Naive thymus-derived CD4-positive, alpha-beta T cell (primary cell): ENCODE measurements at regions of chr1 and their contacts with region 1.

Region 1: DNA sequence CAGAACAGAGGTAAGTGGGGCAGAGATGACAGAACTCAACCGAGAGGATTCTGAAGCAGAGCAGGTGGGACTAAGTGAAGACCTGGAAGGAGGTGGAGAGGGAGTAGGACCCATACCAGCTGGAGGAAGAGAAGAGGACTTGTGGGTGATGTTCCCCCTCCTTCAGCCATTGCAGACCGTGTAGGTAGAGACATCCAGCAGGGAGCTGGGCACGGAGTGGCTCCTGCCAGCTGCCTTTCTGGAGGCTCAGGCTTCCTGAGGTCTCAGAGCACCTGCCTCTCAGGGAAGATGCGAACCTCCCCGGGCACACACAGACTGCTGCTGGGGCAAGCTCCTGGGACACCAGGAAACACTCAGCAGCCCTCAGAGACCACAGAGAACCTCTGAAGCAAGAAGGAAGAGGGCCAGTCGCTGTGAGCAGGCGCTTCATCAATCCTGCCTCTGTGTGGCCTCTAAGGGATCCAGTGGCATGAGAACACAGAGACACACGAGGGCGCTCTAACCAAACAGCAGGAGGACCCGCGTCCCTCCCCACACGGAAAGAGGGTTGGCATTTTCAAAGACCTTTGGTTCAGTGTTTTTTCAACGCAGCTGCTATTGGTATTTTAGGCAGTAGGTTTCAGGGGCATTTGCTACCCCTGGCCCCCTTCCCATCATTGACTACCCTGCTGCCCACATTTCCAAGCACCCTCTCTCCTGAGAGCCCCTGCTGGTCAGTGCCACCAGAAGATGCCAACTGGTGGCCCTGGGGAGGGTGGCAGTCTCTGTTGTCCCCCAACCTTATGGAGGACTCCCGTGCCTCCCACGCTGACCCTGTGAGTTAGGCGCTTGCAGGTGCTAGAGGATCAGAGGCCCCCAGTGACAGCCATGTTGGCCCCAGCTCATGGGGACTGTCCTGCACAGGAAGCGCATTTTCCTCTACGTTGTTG is 89.6 kb upstream of the EDN2 start:
- DNase-seq: peak; percentile 60 to 84 (median 76)
- ATAC-seq: peak; percentile 97
- H3K4me3 ChIP-seq: no peak overlapping the region
- H3K4me3 Mint-ChIP-seq: no peak overlapping the region
- H3K27ac ChIP-seq: no peak overlapping the region
- H3K27ac Mint-ChIP-seq: no peak overlapping the region
- H3K4me1 ChIP-seq: peaks cover 4 to 9% of the 10 kb centered on the region in 2 donors
- H3K4me1 Mint-ChIP-seq: peaks cover 0 to 32% (median 8%) of the 10 kb centered on the region in 7 donors
- H3K27me3 ChIP-seq: no peaks in the 10 kb centered on the region
- H3K27me3 Mint-ChIP-seq: no peaks in the 10 kb centered on the region

Region 2: DNA sequence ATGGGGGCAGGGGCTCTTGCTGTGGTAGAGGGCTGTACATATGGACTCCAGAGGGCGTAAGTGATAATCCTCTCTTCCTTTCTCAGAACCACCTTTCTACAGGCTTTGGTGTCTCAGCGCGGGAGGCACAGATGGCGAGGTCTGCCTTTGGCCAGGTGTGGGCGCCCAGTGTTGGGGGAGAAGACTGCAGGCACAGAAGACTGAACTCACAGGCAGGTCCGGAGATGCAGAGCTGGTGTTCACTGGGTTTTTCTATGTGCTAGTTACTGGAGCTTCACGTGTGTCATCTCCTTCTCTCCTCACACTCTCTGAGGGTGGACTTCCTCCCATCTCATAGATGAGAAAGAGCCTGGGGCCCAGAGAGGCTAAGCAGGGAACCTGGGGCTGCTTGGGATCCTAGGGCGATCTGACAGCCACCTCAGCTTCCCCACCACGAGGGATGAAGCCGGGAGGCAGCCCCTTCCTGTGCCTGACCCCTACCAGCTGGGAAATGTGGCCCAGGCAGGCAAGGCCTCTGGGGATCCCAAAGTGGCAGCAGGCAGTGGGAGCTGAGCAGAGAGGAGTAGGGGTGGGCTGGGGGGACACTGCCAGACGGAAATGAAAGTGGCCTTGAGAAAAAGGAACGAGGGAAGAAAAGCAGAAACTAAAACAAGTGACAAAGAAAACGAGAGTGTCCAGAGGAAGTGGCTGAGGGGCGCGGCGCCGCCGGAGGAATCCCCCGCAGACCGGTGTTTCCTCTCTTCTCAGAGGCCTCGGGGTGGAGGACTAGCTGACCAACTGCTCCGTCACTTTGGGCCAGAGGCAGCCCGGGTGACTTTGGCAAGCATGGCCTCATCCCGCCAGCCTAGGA is 153.1 kb after region 1 on chr1:
- CTCF ChIA-PET with region 1: no interaction called
- POLR2A ChIA-PET with region 1: no interaction called
- intact Hi-C with region 1: no loop called
- DNase-seq: peak in 1 of 9 donors; percentile 37
- ATAC-seq: peak; percentile 76
- H3K4me3 ChIP-seq: no peak overlapping the region
- H3K4me3 Mint-ChIP-seq: peak overlapping the region in 7 of 10 donors; percentile 8 to 74 (median 48)
- H3K27ac ChIP-seq: no peak overlapping the region
- H3K27ac Mint-ChIP-seq: peak overlapping the region in 2 of 9 donors; percentile 19 to 65
- H3K4me1 ChIP-seq: peaks cover 15 to 27% of the 10 kb centered on the region in 2 donors
- H3K4me1 Mint-ChIP-seq: peaks cover 14 to 51% (median 39%) of the 10 kb centered on the region in 7 donors
- H3K27me3 ChIP-seq: no peaks in the 10 kb centered on the region
- H3K27me3 Mint-ChIP-seq: no peaks in the 10 kb centered on the region

Region 3: DNA sequence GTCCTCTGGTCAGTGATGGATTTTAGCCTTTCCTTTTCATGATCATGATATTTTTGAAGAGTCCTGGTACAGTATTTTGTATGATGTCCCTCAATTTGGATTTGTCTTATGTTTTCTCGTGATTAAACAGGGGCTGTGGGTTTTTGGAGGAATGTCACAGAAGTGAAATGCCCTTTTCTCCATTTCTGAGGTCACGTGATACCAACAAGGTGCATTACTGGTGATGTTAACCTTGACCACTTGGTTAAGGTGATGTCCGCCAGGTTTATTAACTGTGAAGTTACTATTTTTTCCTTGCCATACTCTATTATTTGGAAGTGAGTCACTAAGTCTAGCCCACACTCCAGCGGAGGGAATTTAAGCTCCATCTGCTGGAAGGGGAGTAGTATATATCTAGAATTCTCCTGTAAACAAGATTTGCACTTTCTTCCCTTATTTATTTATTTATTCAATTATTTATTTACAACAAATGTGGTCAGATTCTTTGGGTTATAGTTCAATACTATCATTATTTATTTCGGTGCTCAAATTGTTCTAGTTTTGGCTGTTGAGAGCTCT is 221.2 kb after region 1 on chr1:
- CTCF ChIA-PET with region 1: interaction called, 3 read pairs
- POLR2A ChIA-PET with region 1: no interaction called
- intact Hi-C with region 1: loop called (anchors 1 to 5 kb)
- DNase-seq: no peak
- ATAC-seq: no peak
- H3K4me3 ChIP-seq: no peak overlapping the region
- H3K4me3 Mint-ChIP-seq: no peak overlapping the region
- H3K27ac ChIP-seq: no peak overlapping the region
- H3K27ac Mint-ChIP-seq: no peak overlapping the region
- H3K4me1 ChIP-seq: peaks cover 15 to 39% of the 10 kb centered on the region in 2 donors
- H3K4me1 Mint-ChIP-seq: peaks cover 29 to 65% (median 36%) of the 10 kb centered on the region in 7 donors
- H3K27me3 ChIP-seq: no peaks in the 10 kb centered on the region
- H3K27me3 Mint-ChIP-seq: no peaks in the 10 kb centered on the region

Region 4: GRCh38 chr1:41812051-41812450 is 238.0 kb after region 1 on chr1:
- CTCF ChIA-PET with region 1: interaction called, 4 read pairs
- POLR2A ChIA-PET with region 1: no interaction called
- intact Hi-C with region 1: loop called in 1 of 2 experiments (anchors 1 kb)
- DNase-seq: peak in 6 of 9 donors; percentile 23 to 63 (median 47)
- ATAC-seq: peak; percentile 77
- H3K4me3 ChIP-seq: no peak overlapping the region
- H3K4me3 Mint-ChIP-seq: peak overlapping the region in 1 of 10 donors; percentile 29
- H3K27ac ChIP-seq: no peak overlapping the region
- H3K27ac Mint-ChIP-seq: peak overlapping the region in 2 of 9 donors; percentile 21 to 66
- H3K4me1 ChIP-seq: peaks cover 5 to 28% of the 10 kb centered on the region in 2 donors
- H3K4me1 Mint-ChIP-seq: peaks cover 17 to 48% (median 26%) of the 10 kb centered on the region in 7 donors
- H3K27me3 ChIP-seq: no peaks in the 10 kb centered on the region
- H3K27me3 Mint-ChIP-seq: no peaks in the 10 kb centered on the region

Region 5: GRCh38 chr1:41868599-41868998 is 294.6 kb after region 1 on chr1:
- CTCF ChIA-PET with region 1: no interaction called
- POLR2A ChIA-PET with region 1: no interaction called
- intact Hi-C with region 1: loop called (anchors 1 kb)
- DNase-seq: peak in 1 of 9 donors; percentile 50
- ATAC-seq: peak; percentile 70
- H3K4me3 ChIP-seq: no peak overlapping the region
- H3K4me3 Mint-ChIP-seq: peak overlapping the region in 1 of 10 donors; percentile 44
- H3K27ac ChIP-seq: no peak overlapping the region
- H3K27ac Mint-ChIP-seq: peak overlapping the region in 1 of 9 donors; percentile 5
- H3K4me1 ChIP-seq: peaks cover 0 to 4% of the 10 kb centered on the region in 2 donors
- H3K4me1 Mint-ChIP-seq: peaks cover 4 to 23% (median 7%) of the 10 kb centered on the region in 7 donors
- H3K27me3 ChIP-seq: no peaks in the 10 kb centered on the region
- H3K27me3 Mint-ChIP-seq: no peaks in the 10 kb centered on the region

Region 6: DNA sequence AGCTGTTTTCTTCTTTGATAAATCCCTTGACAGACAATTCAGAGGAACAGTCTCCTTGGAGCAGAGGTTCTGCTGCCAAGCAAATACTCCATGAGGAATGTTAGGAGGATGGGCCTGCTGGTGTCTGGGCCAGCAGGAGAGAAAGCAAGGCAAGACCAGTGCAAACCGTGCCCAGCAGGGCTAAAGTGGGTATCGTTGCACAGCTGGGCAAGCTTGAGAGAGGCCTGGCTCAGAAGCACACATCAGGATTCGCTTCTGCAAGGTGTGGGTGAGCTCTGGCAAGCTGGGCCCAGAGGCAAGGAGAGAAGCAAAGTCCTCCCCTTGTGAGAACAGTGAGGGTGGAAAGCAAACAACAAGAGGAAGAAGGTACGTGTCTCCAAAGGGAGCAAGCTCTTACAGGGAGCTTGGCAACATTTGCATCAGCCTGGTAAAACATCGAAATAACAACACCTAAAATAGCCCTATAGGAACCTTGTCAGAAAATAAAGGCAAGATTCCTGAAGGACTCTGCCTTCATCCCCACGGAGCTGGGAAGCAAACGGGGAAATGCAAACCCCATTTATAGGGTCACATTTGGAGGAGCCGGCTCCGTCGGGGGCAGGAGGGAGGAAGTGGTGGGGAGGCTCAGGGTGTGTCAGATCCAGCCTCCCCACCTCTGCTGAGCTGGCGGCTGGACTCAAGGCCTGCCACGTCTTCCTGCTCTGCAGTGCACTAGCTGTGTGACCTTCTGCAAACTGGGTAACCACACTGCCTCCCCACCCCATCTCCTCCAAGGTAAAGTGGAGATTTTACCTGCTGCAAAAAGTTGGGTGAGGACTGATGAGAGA is 407.0 kb after region 1 on chr1:
- CTCF ChIA-PET with region 1: no interaction called
- POLR2A ChIA-PET with region 1: no interaction called
- intact Hi-C with region 1: loop called in 1 of 2 experiments (anchors 5 kb)
- DNase-seq: peak in 2 of 9 donors; percentile 1 to 3
- ATAC-seq: peak; percentile 58
- H3K4me3 ChIP-seq: no peak overlapping the region
- H3K4me3 Mint-ChIP-seq: peak overlapping the region in 4 of 10 donors; percentile 15 to 54 (median 44)
- H3K27ac ChIP-seq: no peak overlapping the region
- H3K27ac Mint-ChIP-seq: peak overlapping the region in 2 of 9 donors; percentile 43 to 77
- H3K4me1 ChIP-seq: peaks cover 6 to 14% of the 10 kb centered on the region in 2 donors
- H3K4me1 Mint-ChIP-seq: peaks cover 12 to 34% (median 19%) of the 10 kb centered on the region in 7 donors
- H3K27me3 ChIP-seq: no peaks in the 10 kb centered on the region
- H3K27me3 Mint-ChIP-seq: no peaks in the 10 kb centered on the region

Region 7: DNA sequence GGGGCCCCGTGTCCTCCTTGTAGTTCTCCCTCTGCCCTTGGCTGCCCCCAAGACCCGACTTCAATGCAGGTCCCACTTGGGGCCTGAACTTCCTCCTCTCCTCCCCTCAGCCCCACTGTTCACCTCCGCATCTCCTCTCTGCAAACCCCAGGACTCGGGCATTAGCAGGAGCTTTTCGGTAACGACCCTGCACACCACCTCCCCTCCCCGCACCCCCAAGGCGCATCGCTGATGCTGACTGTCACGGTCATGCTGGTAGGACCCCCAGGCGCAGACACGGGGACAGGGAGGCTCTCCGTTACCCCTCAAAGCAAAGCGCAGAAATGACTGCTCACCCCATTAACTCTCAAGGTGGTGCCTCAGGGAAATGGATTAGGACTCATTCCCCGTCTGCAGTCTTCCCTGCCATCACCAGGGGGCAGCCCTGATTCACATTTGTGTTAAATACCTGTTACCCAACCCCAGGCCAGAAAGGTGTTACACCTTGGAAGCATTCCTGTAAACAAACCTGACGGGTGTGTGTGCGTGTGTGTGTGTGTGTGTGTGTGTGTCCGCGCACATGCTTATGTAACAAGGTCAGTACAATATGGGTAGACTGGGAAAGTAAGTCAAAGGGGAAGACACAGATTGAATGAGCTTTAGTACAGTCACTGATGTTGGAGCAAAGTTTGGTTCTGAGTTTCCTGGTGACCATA is 572.7 kb after region 1 on chr1:
- CTCF ChIA-PET with region 1: no interaction called
- POLR2A ChIA-PET with region 1: no interaction called
- intact Hi-C with region 1: loop called in 1 of 2 experiments (anchors 10 kb)
- DNase-seq: peak; percentile 30 to 71 (median 61)
- ATAC-seq: peak; percentile 74
- H3K4me3 ChIP-seq: no peak overlapping the region
- H3K4me3 Mint-ChIP-seq: no peak overlapping the region
- H3K27ac ChIP-seq: no peak overlapping the region
- H3K27ac Mint-ChIP-seq: no peak overlapping the region
- H3K4me1 ChIP-seq: no peaks in the 10 kb centered on the region
- H3K4me1 Mint-ChIP-seq: peaks cover 0 to 7% (median 5%) of the 10 kb centered on the region in 7 donors
- H3K27me3 ChIP-seq: peaks cover 0 to 6% of the 10 kb centered on the region in 2 donors
- H3K27me3 Mint-ChIP-seq: peaks cover 3 to 14% (median 11%) of the 10 kb centered on the region in 5 donors

Region 8: GRCh38 chr1:42183210-42183956 is 609.3 kb after region 1 on chr1:
- CTCF ChIA-PET with region 1: no interaction called
- POLR2A ChIA-PET with region 1: no interaction called
- intact Hi-C with region 1: no loop called
- DNase-seq: no peak
- ATAC-seq: no peak
- H3K4me3 ChIP-seq: no peak overlapping the region
- H3K4me3 Mint-ChIP-seq: no peak overlapping the region
- H3K27ac ChIP-seq: no peak overlapping the region
- H3K27ac Mint-ChIP-seq: peak overlapping the region in 1 of 9 donors; percentile 45
- H3K4me1 ChIP-seq: no peaks in the 10 kb centered on the region
- H3K4me1 Mint-ChIP-seq: peaks cover 0 to 3% (median 0%) of the 10 kb centered on the region in 7 donors
- H3K27me3 ChIP-seq: no peaks in the 10 kb centered on the region
- H3K27me3 Mint-ChIP-seq: no peaks in the 10 kb centered on the region

Region 9: DNA sequence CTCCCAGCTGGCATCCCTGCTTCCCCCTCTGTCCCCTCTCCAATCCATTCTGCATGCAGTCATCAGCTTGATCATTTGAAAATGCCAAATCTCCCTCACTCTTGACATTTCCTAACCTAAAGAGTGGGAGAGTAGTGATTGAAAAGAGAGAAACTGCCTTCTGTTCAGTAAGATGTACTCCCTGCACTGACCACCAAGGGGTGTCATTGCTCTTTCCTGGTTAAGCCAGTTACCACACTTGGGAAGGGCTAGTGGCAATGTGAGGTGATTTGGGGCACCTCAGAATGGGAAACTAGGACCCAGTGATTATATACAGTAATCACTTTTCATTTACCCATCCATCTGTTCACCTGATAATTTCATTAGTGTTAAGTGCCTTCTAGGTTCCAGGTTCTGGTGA is 1203.8 kb after region 1 on chr1:
- CTCF ChIA-PET with region 1: no interaction called
- POLR2A ChIA-PET with region 1: no interaction called
- intact Hi-C with region 1: no loop called
- DNase-seq: peak in 4 of 9 donors; percentile 16 to 36 (median 22)
- ATAC-seq: peak; percentile 63
- H3K4me3 ChIP-seq: no peak overlapping the region
- H3K4me3 Mint-ChIP-seq: no peak overlapping the region
- H3K27ac ChIP-seq: no peak overlapping the region
- H3K27ac Mint-ChIP-seq: no peak overlapping the region
- H3K4me1 ChIP-seq: no peaks in the 10 kb centered on the region
- H3K4me1 Mint-ChIP-seq: peaks cover 7 to 26% (median 15%) of the 10 kb centered on the region in 7 donors
- H3K27me3 ChIP-seq: no peaks in the 10 kb centered on the region
- H3K27me3 Mint-ChIP-seq: no peaks in the 10 kb centered on the region